ENCODE measurements at regions of chr15 and their contacts with region 1.

Region 1: GRCh38 chr15:63188926-63189871 is at the start of gene RAB8B:
- DNase-seq: peak; percentile 97
- H3K4me3 ChIP-seq: peak within 1 kb of the TSS; percentile 75 to 82
- H3K27ac ChIP-seq: peak within 1 kb of the TSS; percentile 87 to 88
- H3K4me1 ChIP-seq: no peaks in the 10 kb centered on the region
- H3K27me3 ChIP-seq: no peaks in the 10 kb centered on the region
- CTCF ChIP-seq: peak in 3 of 4 experiments; percentile 24 to 27 (median 24)
- POLR2A ChIP-seq: peak; percentile 66
- total RNA-seq, gene RAB8B: 18.5 to 29.2 TPM

Region 2: DNA sequence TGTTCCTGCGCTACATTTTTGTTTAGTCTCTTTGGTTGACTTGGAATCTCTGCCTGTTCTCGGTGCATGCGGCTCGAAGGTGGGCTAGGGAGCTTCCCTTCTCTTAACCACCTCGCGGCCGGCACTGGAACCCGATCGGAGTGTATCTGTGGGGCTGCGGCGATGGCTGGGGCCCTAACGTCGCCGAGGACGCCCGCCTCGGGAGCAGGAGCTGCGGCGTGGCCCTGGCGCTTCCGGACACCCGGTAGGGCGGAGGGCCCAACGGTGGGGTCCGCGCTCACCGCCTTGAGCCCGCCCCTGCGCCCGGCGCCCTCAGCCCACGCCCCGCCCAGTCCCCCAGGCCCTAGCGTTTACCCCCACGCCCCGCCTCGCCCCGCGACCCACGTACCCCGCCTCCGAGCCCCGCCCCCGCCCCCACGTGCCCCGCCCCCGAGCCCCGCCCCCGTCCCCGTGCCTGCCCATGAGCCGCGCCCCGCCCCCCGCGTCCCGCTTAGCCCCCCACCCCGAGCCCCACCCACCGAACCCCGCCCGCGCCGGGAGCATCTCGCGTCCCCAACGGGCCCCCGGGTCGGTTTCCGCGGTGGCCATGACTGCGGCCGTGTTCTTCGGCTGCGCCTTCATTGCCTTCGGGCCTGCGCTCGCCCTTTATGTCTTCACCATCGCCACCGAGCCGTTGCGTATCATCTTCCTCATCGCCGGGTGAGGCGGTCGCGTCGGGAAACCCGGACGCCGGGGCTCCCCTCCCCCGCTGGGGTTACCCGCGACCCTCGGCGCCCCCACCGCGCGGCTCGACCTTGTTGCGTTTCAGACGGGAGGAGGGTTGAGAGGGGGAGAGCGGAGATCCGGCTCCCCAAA is 88.1 kb after region 1 on chr15 and contains the start of gene APH1B:
- intact Hi-C with region 1: loop called (anchors 2 kb)
- DNase-seq: peak; percentile 80
- H3K4me3 ChIP-seq: peak within 1 kb of the TSS; percentile 90 to 97
- H3K27ac ChIP-seq: peak within 1 kb of the TSS; percentile 92 to 96
- H3K4me1 ChIP-seq: no peaks in the 10 kb centered on the region
- H3K27me3 ChIP-seq: no peaks in the 10 kb centered on the region
- CTCF ChIP-seq: peak in 1 of 4 experiments; percentile 8
- POLR2A ChIP-seq: peak; percentile 61
- total RNA-seq, gene APH1B: 20.0 to 35.0 TPM

Region 3: DNA sequence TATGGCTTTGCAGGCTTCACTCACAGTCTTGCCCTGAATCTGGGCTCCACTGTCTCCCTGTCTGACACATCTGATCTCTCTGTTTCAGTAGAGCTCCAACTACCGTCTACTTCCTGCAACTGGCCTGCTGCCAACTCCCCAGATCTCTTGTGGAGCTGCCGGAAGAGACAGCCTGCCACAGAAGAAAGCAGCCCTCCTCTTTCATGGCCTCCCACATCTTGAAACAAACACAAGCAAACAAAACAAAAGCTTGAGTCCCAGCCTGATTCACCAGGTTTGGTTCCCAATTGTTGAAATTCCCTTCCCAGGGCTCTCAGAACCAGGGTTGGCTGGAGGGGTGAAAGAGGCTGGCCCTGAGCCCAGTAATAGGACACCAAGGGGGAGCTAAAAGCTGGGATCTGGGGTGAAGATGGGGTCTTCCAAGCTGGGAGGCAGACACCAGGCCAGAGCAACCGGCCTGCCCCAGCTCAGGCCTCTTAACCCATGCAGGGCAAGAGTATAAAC is 247.7 kb after region 1 on chr15:
- intact Hi-C with region 1: no loop called
- DNase-seq: peak; percentile 81
- H3K4me3 ChIP-seq: no peak overlapping the region
- H3K27ac ChIP-seq: peak overlapping the region; percentile 21 to 59
- H3K4me1 ChIP-seq: no peaks in the 10 kb centered on the region
- H3K27me3 ChIP-seq: no peaks in the 10 kb centered on the region
- CTCF ChIP-seq: no peak
- POLR2A ChIP-seq: no peak

Measured in prostate gland (tissue), 2 donors.